ENCODE measurements at regions of chrX and their contacts with region 1.

Region 1: DNA sequence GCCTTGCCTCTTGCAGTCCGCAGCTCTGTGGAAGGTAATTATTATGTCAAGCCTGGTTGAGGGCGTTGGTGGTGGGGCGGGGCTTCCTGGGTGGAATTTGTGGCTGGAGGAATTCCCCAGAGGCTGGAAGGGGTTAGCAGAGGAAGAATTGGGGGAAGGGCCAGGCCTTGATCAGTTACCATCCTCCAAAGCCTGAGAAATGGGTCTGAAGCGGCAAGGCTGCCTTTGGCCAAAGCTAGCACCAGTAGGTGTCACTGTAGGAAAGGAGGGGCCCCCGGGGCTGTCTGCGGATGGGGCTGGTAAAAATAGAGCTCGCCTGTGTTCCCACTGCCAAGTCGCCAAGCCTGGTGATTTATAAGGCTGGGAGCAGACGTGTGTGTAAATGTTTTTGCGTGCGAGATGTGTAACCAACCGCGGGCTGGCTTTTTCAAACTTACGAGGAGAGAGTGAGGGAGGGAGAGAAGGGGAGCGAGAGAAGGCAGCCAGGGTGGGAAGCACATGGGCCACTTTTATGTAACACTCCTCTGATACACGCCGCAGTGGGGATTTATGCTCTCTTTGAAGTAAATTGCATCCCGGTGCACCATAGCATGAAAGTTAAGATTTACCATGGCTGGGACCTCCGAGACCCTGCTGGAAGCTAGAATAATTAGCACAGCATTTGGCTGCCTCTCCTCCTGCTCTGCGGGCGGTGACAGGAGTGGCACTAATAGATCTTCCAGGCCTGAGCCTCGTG is 366.9 kb downstream of the BCOR start:
- DNase-seq: peak; percentile 73
- ATAC-seq: peak; percentile 86

Region 2: GRCh38 chrX:39497702-39498265 is 233.0 kb before region 1 on chrX:
- intact Hi-C with region 1: no loop called
- DNase-seq: no peak
- ATAC-seq: no peak

Region 3: GRCh38 chrX:39874202-39874816 is 143.5 kb after region 1 on chrX:
- intact Hi-C with region 1: no loop called
- DNase-seq: no peak
- ATAC-seq: no peak

Region 4: GRCh38 chrX:40097497-40098263 is 366.9 kb after region 1 on chrX and contains the start of gene BCOR:
- intact Hi-C with region 1: loop called (anchors 10 kb)
- DNase-seq: peak; percentile 79
- ATAC-seq: peak; percentile 65
- total RNA-seq, gene BCOR: 14.0 TPM

Region 5: DNA sequence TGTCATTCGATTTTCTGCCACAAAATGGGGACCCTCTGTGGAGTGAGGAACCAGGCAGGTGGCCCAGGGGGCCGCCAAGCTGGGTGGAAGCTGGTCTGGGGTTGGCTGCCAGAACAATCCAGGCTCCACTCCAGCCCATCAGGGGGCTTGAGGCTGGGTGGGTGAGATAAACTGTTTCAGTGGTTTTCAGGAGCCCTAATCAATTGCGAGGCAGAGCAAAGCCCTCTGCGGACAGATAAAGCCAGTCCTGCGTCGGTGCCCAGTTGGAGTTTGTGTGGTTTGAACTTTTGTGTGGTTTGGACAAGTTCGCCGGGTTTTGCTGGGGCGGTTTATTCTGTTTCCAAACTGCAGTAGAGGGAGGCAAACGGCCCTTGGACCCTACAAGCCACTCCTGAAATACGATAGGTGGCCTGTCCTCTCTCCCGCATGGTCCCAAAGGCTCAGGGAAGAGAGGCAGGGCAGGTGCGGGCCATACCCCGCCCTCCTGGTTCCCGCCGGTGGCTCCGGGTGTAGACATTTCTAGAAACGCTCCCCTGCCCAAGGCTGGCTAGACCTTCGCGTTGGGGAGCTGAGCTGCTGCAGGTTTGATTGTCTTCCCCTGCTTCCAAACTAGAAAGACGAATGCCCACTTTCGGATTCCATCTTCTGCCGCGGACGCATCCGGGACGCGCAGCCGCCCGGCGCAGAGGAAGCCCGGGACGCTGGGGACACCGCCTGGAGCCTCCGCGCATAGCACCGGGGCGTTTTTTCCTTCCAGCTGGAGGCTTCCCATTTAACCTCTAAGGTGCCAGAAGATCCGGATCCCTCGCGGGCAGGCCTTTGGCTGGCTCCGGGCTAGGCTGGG is 535.9 kb after region 1 on chrX:
- intact Hi-C with region 1: loop called (anchors 10 kb)
- DNase-seq: peak; percentile 80
- ATAC-seq: peak; percentile 95

Measured in Right ventricle myocardium superior (tissue), 1 donor.